ENCODE measurements at regions of chr1 and their contacts with region 1.

Region 1: DNA sequence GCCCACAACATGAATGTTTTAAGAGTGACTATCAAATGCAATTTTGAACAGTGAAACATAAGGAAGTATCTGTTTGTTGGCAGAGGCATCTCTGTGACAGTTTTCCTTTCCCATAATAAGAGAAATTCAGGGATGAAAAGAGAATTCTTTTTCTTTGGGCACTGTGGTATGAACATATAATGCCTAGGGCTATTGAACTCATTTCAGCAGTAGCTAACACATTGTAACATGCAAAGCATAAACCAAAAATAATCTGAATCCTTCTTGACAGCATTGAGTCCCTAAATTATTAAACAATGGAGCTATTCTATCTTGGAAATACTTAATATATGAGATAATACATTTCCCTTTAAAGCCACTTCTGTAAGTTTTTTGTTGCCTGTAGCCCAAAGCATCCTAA is 633.0 kb upstream of the B3GALT2 start:
- DNase-seq: no peak
- ATAC-seq: no peak
- H3K4me3 Mint-ChIP-seq: no peak overlapping the region
- H3K27ac Mint-ChIP-seq: no peak overlapping the region
- H3K4me1 Mint-ChIP-seq: no peaks in the 10 kb centered on the region
- H3K27me3 Mint-ChIP-seq: no peaks in the 10 kb centered on the region

Region 2: GRCh38 chr1:193799948-193800690 is 19.3 kb before region 1 on chr1:
- CTCF ChIA-PET with region 1: no interaction called
- POLR2A ChIA-PET with region 1: no interaction called
- intact Hi-C with region 1: loop called in 1 of 2 experiments (anchors 2 kb)
- DNase-seq: peak; percentile 5
- ATAC-seq: peak; percentile 77
- H3K4me3 Mint-ChIP-seq: no peak overlapping the region
- H3K27ac Mint-ChIP-seq: no peak overlapping the region
- H3K4me1 Mint-ChIP-seq: peaks cover 11% of the 10 kb centered on the region
- H3K27me3 Mint-ChIP-seq: no peaks in the 10 kb centered on the region

Region 3: GRCh38 chr1:193884848-193885558 is 65.6 kb after region 1 on chr1:
- CTCF ChIA-PET with region 1: no interaction called
- POLR2A ChIA-PET with region 1: no interaction called
- intact Hi-C with region 1: no loop called
- DNase-seq: no peak
- ATAC-seq: no peak
- H3K4me3 Mint-ChIP-seq: no peak overlapping the region
- H3K27ac Mint-ChIP-seq: no peak overlapping the region
- H3K4me1 Mint-ChIP-seq: no peaks in the 10 kb centered on the region
- H3K27me3 Mint-ChIP-seq: no peaks in the 10 kb centered on the region

Measured in activated CD4-positive, alpha-beta T cell treated with anti-CD3 and anti-CD28 coated beads for 36 hours (primary cell).